HEK293 (cell line): ENCODE measurements at regions of chr11 and their contacts with region 1.

Region 1: GRCh38 chr11:78564490-78565467 is 9.9 kb downstream of the NARS2 start:
- H3K4me3 ChIP-seq: no peak overlapping the region
- H3K27ac ChIP-seq: no peak overlapping the region
- H3K4me1 ChIP-seq: no peaks in the 10 kb centered on the region
- CTCF ChIP-seq: peak; percentile 38; the same call in 1 of the 2 replicates

Region 2: DNA sequence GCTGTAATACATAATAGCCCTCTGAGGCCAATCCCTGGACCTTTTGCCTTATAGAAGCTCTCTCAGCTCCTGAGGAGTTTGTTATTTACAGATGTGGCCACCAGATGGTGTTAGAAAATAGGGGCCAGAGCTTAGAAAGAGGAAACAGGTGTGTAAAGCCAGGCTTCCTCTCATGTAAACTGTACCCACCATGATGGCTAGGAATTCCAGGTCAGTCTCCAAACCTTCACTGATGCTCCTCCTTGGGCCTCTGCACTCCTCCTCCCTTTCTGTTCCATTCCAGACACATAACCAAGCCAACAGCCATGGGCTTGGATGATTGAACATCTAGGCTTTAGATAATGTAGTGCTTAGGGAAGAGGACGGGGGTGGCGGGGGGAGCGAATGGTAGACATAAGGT is 336.3 kb before region 1 on chr11:
- CTCF ChIA-PET with region 1: interaction called, 49 read pairs
- POLR2A ChIA-PET with region 1: no interaction called
- H3K4me3 ChIP-seq: no peak overlapping the region
- H3K27ac ChIP-seq: no peak overlapping the region
- H3K4me1 ChIP-seq: no peaks in the 10 kb centered on the region
- CTCF ChIP-seq: no peak

Region 3: DNA sequence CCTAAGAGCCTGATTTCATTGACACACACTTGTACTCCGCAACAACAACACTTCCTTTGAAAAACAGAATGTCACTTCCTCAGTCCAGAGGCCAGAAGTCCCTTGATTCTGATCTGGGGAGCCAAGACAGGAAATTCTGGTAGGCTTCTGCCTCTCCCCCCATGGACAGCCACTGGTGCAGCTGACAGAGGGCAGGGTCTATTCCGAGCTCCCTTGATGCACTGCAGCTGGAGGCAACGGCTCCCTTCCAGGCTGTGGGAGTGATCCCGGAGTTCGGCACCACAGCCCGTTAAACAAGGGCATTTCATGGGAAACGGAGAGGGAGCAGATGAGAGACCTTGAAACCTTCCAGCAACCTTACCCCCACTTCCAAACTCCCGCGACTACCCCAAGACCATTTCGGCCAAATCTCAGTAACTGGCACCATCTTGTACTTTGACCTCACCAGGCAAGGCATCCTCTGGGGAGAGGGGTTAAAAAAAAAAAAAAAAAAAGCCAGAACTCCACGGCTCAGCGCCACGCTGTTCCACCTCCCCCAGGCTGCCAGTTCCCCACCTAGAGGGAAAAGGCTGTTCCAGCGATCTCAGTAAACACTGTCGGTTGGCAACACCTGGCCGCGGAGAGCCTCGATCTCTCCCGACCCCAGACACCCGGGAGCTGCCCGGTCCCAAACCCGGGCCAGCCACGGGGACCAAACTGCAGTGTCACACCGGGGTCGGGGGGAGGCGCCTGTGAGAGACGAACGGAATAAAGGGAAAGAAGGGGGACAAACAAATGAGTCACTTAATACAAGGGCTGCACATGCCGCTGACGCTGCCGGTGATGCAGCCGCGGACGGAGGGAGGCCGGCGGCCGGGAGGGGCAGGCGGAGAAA is 148.2 kb before region 1 on chr11:
- CTCF ChIA-PET with region 1: interaction called, 52 read pairs
- POLR2A ChIA-PET with region 1: no interaction called
- H3K4me3 ChIP-seq: peak overlapping the region; percentile 63
- H3K27ac ChIP-seq: 0 out of 2 replicates have a peak overlapping the region, but pooled peaks have one; percentile 11
- H3K4me1 ChIP-seq: no peaks in the 10 kb centered on the region; the same call in 1 of the 2 replicates
- CTCF ChIP-seq: peak; percentile 54

Region 4: DNA sequence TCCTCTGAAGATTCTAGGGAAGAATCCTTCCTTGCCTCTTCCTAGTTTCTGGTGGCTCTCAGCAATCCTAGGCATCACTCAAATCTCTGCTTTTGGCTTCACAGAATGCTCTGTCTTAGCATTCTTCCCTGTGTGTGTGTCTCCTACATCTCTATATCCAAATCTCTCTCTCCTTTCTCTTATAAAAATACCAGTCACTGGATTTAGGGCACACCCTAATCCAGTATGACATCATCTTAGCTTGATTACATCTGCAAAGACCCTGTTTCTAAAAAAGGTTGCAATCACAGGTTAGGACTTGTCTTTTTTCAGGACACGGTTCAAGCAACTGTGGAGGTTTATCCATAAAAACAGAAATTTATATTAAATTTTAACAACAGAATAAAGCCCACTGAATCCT is 44.5 kb before region 1 on chr11:
- CTCF ChIA-PET with region 1: interaction called, 10 read pairs
- POLR2A ChIA-PET with region 1: no interaction called
- H3K4me3 ChIP-seq: no peak overlapping the region
- H3K27ac ChIP-seq: no peak overlapping the region
- H3K4me1 ChIP-seq: no peaks in the 10 kb centered on the region
- CTCF ChIP-seq: no peak

Region 5: DNA sequence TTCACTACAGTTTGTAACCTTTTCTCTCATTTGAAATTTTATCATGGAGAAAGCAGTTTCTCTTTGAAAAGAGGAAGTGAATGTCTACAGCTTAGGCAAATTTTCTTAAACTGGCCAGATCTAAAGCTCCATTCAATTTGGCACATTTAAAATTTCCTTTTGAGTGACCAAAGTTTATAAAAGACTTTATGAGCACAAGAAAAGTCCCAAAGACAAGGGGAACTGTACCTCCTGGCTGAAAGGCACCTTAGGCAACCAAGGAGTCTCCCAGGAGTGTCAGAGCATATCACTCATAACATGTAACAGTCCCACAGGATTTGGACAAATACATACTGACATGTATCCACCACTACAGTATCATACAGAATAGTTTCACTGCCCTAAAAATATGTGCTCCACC is 31.4 kb before region 1 on chr11:
- CTCF ChIA-PET with region 1: interaction called, 10 read pairs
- POLR2A ChIA-PET with region 1: no interaction called
- H3K4me3 ChIP-seq: no peak overlapping the region
- H3K27ac ChIP-seq: no peak overlapping the region
- H3K4me1 ChIP-seq: no peaks in the 10 kb centered on the region
- CTCF ChIP-seq: no peak

Region 6: GRCh38 chr11:78548911-78549590 is 15.7 kb before region 1 on chr11:
- CTCF ChIA-PET with region 1: interaction called, 18 read pairs
- POLR2A ChIA-PET with region 1: no interaction called
- H3K4me3 ChIP-seq: no peak overlapping the region
- H3K27ac ChIP-seq: no peak overlapping the region
- H3K4me1 ChIP-seq: no peaks in the 10 kb centered on the region
- CTCF ChIP-seq: no peak